Colonic mucosa (tissue), 4 donors: ENCODE measurements at regions of chr3 and their contacts with region 1.

Region 1: GRCh38 chr3:12462159-12462947 is 21.9 kb upstream of the TSEN2 start:
- DNase-seq: peak; percentile 59
- H3K4me3 ChIP-seq: no peak overlapping the region
- H3K27ac ChIP-seq: peak overlapping the region; percentile 58
- H3K4me1 ChIP-seq: peaks cover 14% of the 10 kb centered on the region
- H3K27me3 ChIP-seq: no peaks in the 10 kb centered on the region
- CTCF ChIP-seq: no peak

Region 2: GRCh38 chr3:12308517-12308916 is 153.8 kb before region 1 on chr3:
- intact Hi-C with region 1: loop called (anchors 10 kb)
- DNase-seq: no peak
- H3K4me3 ChIP-seq: no peak overlapping the region
- H3K27ac ChIP-seq: no peak overlapping the region
- H3K4me1 ChIP-seq: no peaks in the 10 kb centered on the region
- H3K27me3 ChIP-seq: no peaks in the 10 kb centered on the region
- CTCF ChIP-seq: no peak